ENCODE measurements at regions of chr6 and their contacts with region 1.

Region 1: DNA sequence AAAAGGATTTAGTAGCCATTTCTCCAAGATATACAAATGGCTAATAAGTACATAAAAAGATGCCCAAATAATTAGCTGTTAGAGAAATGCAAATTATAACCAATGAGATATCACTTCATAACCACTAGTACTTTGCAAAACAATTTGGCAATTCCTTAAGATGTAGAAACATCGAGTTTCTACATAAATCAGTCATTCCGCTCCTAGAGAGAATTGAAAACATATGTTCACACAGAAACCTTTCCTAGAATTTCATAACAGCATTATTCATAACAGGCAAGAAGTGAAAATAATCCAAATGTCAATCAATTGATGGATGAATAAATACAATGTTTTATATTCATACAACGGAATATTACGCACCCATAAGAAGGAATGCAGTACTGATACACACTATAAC is 20.5 kb upstream of the NT5E start:
- DNase-seq: no peak
- CTCF ChIP-seq: no peak

Region 2: DNA sequence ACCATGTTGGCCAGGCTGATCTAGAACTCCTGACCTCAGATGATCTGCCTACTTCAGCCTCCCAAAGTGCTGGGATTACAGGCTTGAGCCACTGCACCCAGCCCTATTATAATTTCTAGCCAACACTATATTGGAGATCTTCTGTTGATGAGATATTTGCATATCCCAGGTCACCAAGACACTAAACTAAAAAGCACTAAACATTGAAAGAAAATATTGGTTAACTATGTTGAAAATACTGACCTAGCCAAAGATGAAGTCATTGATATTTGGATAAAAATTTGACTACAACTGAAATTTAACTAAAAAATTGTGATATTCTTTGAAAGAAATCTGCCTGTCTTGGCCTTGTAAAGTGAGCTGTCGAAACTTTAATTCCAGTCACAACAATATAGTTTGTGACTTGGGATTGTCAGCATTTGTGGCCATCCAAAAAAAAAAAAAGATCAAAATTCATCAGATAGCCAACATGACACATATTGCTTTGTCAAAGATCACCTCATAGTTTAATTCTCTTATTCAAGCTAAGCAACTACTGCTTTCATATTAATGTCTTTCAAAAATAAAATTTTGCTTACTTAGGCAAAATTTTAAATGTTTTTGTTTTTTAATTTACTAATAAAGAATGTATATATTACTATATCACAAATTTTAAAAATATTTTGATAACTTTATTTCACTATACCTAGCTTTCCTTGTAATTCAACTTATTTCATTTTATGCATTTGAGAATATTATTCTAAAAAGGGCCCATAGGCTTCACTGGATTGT is 14.2 kb after region 1 on chr6:
- CTCF ChIA-PET with region 1: interaction called, 11 read pairs
- POLR2A ChIA-PET with region 1: no interaction called
- DNase-seq: no peak
- CTCF ChIP-seq: no peak

Region 3: GRCh38 chr6:85714893-85715530 is 285.7 kb after region 1 on chr6:
- CTCF ChIA-PET with region 1: no interaction called
- POLR2A ChIA-PET with region 1: no interaction called
- DNase-seq: no peak
- CTCF ChIP-seq: no peak

Measured in GM10248 (cell line).